A673 (cell line): ENCODE measurements at regions of chr1 and their contacts with region 1.

Region 1: GRCh38 chr1:51264451-51264850 is 28.4 kb downstream of the RNF11 start:
- DNase-seq: peak; percentile 62
- H3K4me3 ChIP-seq: no peak overlapping the region
- H3K27ac ChIP-seq: no peak overlapping the region
- H3K4me1 ChIP-seq: peaks cover 27% of the 10 kb centered on the region
- H3K27me3 ChIP-seq: no peaks in the 10 kb centered on the region
- CTCF ChIP-seq: no peak

Region 2: GRCh38 chr1:51235673-51236530 is 28.5 kb before region 1 on chr1 and contains the start of gene RNF11:
- CTCF ChIA-PET with region 1: no interaction called
- POLR2A ChIA-PET with region 1: no interaction called
- intact Hi-C with region 1: no loop called
- DNase-seq: peak; percentile 93
- H3K4me3 ChIP-seq: peak within 1 kb of the TSS; percentile 93
- H3K27ac ChIP-seq: peak within 1 kb of the TSS; percentile 86
- H3K4me1 ChIP-seq: peaks cover 24% of the 10 kb centered on the region
- H3K27me3 ChIP-seq: no peaks in the 10 kb centered on the region
- CTCF ChIP-seq: no peak
- total RNA-seq, gene RNF11: 59.9 and 67.5 TPM in 2 replicates

Region 3: GRCh38 chr1:51341876-51342496 is 77.5 kb after region 1 on chr1:
- CTCF ChIA-PET with region 1: no interaction called
- POLR2A ChIA-PET with region 1: no interaction called
- intact Hi-C with region 1: no loop called
- DNase-seq: peak; percentile 72
- H3K4me3 ChIP-seq: no peak overlapping the region
- H3K27ac ChIP-seq: no peak overlapping the region
- H3K4me1 ChIP-seq: peaks cover 6% of the 10 kb centered on the region
- H3K27me3 ChIP-seq: no peaks in the 10 kb centered on the region
- CTCF ChIP-seq: peak; percentile 64

Region 4: GRCh38 chr1:51380936-51381335 is 116.5 kb after region 1 on chr1:
- CTCF ChIA-PET with region 1: interaction called, 14 read pairs
- POLR2A ChIA-PET with region 1: no interaction called
- intact Hi-C with region 1: no loop called
- DNase-seq: no peak
- H3K4me3 ChIP-seq: no peak overlapping the region
- H3K27ac ChIP-seq: no peak overlapping the region
- H3K4me1 ChIP-seq: no peaks in the 10 kb centered on the region
- H3K27me3 ChIP-seq: no peaks in the 10 kb centered on the region
- CTCF ChIP-seq: no peak

Region 5: DNA sequence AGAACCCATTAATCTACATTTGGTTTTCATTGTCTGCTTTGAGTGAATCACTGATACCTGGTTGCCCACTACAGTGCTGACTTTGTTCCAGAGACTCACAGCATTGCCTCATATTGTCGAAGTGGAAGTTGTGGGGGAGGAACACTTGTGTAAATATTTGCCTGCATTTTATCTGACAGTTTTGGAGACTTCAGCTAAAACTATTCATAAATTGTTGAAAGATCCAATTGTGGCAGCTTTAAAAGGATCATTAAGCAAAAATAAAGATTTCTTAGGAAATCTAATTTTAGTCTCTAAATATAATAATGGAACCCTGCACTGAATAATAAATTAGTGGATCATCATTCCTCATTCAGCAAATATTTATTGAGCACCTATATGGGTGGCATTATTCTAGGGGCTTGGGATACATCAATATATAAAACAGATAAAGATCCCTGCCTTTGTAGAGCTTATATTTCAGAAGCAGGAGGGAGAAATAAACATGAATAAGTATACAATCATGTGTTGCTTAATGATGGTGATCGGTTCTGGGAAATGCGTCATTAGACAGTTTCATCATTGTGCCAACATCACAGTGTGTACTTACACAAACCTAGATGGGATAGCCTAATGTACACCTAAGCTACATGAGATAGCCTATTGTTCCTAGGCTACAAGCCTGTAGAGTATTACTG is 426.0 kb after region 1 on chr1:
- CTCF ChIA-PET with region 1: no interaction called
- POLR2A ChIA-PET with region 1: no interaction called
- intact Hi-C with region 1: no loop called
- DNase-seq: no peak
- H3K4me3 ChIP-seq: no peak overlapping the region
- H3K27ac ChIP-seq: no peak overlapping the region
- H3K4me1 ChIP-seq: peaks cover 21% of the 10 kb centered on the region
- H3K27me3 ChIP-seq: no peaks in the 10 kb centered on the region
- CTCF ChIP-seq: no peak